Activated CD8-positive, alpha-beta T cell treated with anti-CD3 and anti-CD28 coated beads, Interleukin-2, amount 10 ng/mL, durations not matched to agents 7 days and 5 days (primary cell): ENCODE measurements at regions of chr16 and their contacts with region 1.

Region 1: DNA sequence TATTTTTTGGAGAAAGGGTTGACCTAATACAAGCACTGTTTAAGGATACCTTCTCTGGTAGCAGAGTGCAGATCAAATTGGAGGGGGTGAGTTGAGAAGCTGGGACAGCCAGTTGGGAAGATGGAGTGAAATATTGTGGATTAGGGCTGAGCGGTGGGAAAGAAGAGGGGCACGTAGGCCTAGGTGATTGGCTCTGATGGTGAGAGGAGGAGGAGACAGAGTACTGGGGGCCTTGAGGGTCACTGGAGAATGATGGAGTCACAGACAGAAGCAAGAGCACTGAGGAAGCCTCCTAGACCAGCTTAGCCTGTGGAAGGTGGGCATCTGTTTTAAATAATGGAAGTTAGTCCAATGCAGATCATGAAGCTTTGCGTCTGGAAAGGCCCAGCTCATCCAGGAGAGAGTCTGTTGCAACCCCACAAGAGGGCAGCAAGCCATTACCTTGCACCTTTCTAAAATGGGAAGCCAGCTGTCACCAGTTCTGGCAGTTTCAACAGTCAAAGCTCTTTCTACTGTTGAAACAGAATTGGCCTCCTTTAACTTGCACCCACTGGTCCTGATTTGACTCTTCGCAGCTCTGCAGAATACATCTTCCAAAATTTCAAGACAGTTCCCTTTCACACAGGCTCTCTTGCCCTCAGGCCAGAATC is 11.8 kb downstream of the SLC9A5 start:
- DNase-seq: peak; percentile 51
- ATAC-seq: peak; percentile 54
- H3K4me3 Mint-ChIP-seq: no peak overlapping the region
- H3K27ac Mint-ChIP-seq: no peak overlapping the region
- H3K4me1 Mint-ChIP-seq: no peaks in the 10 kb centered on the region
- H3K27me3 Mint-ChIP-seq: no peaks in the 10 kb centered on the region

Region 2: DNA sequence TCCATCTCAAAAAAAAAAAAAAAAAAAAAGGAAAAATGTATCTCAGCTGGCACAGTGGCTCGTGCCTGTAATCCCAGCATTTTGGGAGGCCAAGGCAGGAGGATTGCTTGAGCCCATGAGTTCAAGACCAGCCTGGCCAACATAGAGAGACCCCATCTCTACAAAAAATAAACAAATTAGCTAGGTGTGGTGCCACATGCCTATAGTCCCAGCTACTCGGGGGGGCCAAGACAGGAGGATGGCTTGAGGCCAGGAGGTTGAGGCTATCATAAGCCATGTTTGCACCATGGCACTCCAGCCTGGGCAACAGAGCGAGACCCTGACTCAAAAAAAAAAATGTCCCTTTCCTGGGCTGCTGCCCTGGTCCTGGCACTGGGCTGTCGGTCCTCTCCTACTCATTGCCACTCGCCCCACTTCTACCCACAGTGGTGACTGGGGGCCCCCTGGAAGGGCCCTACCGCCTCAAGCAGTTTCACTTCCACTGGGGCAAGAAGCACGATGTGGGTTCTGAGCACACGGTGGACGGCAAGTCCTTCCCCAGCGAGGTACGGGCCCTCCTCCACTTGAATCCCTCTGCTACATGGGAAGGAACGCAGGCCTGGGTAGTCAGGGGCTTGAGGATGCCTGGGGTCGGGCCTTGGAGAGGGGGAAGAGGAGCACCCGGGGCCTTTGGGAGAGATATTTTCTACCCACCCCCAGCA is 410.3 kb before region 1 on chr16:
- CTCF ChIA-PET with region 1: no interaction called
- POLR2A ChIA-PET with region 1: no interaction called
- DNase-seq: no peak
- ATAC-seq: no peak
- H3K4me3 Mint-ChIP-seq: no peak overlapping the region
- H3K27ac Mint-ChIP-seq: no peak overlapping the region
- H3K4me1 Mint-ChIP-seq: peaks cover 24% of the 10 kb centered on the region
- H3K27me3 Mint-ChIP-seq: peaks cover 14% of the 10 kb centered on the region

Region 3: GRCh38 chr16:67068212-67068753 is 192.3 kb before region 1 on chr16:
- CTCF ChIA-PET with region 1: no interaction called
- POLR2A ChIA-PET with region 1: no interaction called
- DNase-seq: no peak
- ATAC-seq: no peak
- H3K4me3 Mint-ChIP-seq: no peak overlapping the region
- H3K27ac Mint-ChIP-seq: no peak overlapping the region
- H3K4me1 Mint-ChIP-seq: peaks cover 7% of the 10 kb centered on the region
- H3K27me3 Mint-ChIP-seq: no peaks in the 10 kb centered on the region

Region 4: DNA sequence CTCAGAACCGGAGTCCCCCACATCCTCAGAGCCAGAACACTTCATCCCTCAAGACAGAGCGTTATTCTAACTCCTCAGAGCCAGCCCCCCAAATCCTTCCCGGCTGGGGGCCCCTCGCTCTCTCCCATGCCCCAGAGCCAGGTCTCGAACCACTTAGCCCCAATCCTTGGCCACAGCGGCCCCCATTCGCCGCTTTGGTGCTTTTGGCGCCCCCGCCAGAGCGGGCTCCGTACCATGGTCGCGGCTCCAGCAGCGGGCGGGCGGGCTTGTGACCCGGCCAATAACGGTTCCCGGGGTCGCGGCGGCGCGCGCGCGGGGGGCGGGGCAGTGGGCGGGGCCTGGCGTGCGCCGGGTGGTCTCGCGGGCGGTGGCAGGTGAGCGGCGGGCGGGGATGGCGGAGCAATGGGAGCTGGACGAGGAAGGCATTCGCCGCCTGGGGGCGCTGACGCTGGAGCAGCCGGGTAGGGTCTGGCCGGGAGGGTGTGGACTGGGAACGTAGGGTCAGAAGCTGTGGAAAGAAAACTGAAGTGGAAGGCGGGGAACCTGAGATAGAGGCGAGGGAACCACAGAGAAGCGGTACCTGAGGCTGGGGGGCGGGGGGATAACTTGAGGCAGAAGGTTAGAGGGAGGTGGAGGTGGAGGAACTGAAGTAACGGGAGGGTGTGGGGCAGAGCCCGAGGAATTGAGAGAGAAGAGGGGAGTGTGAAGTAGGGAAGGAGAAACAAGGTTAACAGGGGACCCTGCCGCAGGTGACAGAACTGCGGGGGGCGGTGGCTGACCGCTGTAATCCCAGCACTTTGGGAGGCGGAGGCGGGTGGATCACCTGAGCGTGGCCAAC is 66.1 kb after region 1 on chr16 and contains the starts of genes KCTD19 and LRRC36:
- CTCF ChIA-PET with region 1: interaction called, 10 read pairs
- POLR2A ChIA-PET with region 1: no interaction called
- DNase-seq: peak; percentile 73
- ATAC-seq: peak; percentile 87
- H3K4me3 Mint-ChIP-seq: peak within 1 kb of the TSS; percentile 83
- H3K27ac Mint-ChIP-seq: peak within 1 kb of the TSS; percentile 54
- H3K4me1 Mint-ChIP-seq: peaks cover 11% of the 10 kb centered on the region
- H3K27me3 Mint-ChIP-seq: peaks cover 38% of the 10 kb centered on the region
- total RNA-seq, gene KCTD19: 0.65 to 1.1 TPM
- total RNA-seq, gene LRRC36: not detected

Region 5: DNA sequence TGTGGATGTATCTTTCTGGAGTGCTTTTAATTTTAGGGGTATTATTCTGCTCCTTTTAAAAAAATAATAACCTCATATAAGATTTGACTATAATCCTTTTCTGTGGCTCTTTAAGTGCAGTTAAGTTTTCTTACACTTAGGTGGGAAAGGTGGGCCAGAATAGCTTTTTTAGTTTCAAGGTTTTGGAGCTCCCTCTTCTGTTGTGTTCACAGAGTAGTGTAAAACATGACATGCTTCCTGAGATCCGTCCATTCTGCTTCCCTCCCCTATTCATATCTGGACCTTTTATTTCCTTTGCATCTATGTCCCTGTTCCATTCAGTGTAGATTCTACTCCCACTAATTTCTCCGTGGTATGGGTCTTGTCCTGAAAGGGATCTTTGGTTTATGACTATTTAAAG is 78.9 kb after region 1 on chr16:
- CTCF ChIA-PET with region 1: interaction called, 16 read pairs
- POLR2A ChIA-PET with region 1: no interaction called
- DNase-seq: peak; percentile 15
- ATAC-seq: no peak
- H3K4me3 Mint-ChIP-seq: no peak overlapping the region
- H3K27ac Mint-ChIP-seq: no peak overlapping the region
- H3K4me1 Mint-ChIP-seq: no peaks in the 10 kb centered on the region
- H3K27me3 Mint-ChIP-seq: peaks cover 16% of the 10 kb centered on the region

Region 6: GRCh38 chr16:67399181-67399733 is 138.7 kb after region 1 on chr16:
- CTCF ChIA-PET with region 1: interaction called, 34 read pairs
- POLR2A ChIA-PET with region 1: no interaction called
- DNase-seq: peak; percentile 55
- ATAC-seq: peak; percentile 81
- H3K4me3 Mint-ChIP-seq: no peak overlapping the region
- H3K27ac Mint-ChIP-seq: no peak overlapping the region
- H3K4me1 Mint-ChIP-seq: peaks cover 1% of the 10 kb centered on the region
- H3K27me3 Mint-ChIP-seq: peaks cover 23% of the 10 kb centered on the region